Transverse colon (tissue), 4 donors: ENCODE measurements at regions of chr5 and their contacts with region 1.

Region 1: DNA sequence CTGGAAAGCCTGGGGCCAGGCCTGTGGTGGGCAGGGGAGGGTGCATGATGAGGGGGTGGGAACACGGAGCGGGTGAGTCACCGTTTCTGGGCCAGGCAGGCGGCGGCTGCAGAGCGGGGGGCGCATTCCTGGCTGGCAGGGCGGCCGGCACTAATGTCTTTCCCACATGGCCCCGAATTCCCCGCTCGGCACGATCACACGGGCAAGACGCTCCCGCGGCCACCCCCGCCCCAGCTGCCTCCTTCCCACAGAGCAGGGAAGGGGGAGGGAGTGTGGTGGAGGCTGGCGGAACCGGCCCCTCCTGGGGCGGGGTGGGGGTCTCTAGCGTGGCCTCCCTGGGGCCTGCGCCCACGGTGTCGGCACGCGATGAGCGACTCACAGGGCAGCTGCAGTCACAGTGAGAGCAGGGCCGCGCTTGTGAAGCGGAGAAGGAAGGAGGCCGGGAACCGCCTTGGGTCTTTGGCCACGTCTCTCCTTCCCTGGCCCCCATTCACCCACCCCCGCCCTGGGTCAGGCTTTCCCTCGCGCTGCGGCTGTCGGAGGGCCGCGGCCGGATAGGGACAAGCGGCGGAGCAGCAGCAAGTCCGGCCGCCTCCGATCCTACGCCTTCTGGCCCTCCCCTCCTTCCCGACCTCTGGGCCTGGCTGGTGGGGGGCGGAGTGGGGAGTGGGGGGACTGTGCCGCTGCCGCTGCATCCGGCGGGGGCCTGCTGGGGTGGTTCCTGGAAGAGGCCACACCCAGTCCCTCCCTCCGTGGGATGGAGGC is 48.9 kb downstream of the CXXC5 start:
- DNase-seq: peak; percentile 59
- H3K4me3 ChIP-seq: peak overlapping the region; percentile 19 to 46 (median 33)
- H3K27ac ChIP-seq: peak overlapping the region; percentile 80 to 84 (median 81)
- H3K4me1 ChIP-seq: peaks cover 25 to 38% (median 29%) of the 10 kb centered on the region in 4 donors
- H3K27me3 ChIP-seq: peaks cover 22% of the 10 kb centered on the region
- CTCF ChIP-seq: no peak
- EP300 ChIP-seq: no peak
- POLR2A ChIP-seq: no peak

Region 2: GRCh38 chr5:139648205-139649081 is 48.6 kb before region 1 on chr5 and contains the start of gene CXXC5:
- in situ Hi-C with region 1: loop called in 1 of 4 experiments (anchors 10 kb)
- intact Hi-C with region 1: no loop called
- DNase-seq: peak; percentile 90
- H3K4me3 ChIP-seq: peak within 1 kb of the TSS; percentile 58 to 93 (median 89)
- H3K27ac ChIP-seq: peak within 1 kb of the TSS; percentile 91 to 96 (median 93)
- H3K4me1 ChIP-seq: peaks cover 19 to 77% (median 64%) of the 10 kb centered on the region in 4 donors
- H3K27me3 ChIP-seq: no peaks in the 10 kb centered on the region
- CTCF ChIP-seq: no peak
- EP300 ChIP-seq: no peak
- POLR2A ChIP-seq: peak; percentile 70
- total RNA-seq, gene CXXC5: 26.5 to 50.7 (median 36.2) TPM